Panc1 (cell line): ENCODE measurements at regions of chr19 and their contacts with region 1.

Region 1: DNA sequence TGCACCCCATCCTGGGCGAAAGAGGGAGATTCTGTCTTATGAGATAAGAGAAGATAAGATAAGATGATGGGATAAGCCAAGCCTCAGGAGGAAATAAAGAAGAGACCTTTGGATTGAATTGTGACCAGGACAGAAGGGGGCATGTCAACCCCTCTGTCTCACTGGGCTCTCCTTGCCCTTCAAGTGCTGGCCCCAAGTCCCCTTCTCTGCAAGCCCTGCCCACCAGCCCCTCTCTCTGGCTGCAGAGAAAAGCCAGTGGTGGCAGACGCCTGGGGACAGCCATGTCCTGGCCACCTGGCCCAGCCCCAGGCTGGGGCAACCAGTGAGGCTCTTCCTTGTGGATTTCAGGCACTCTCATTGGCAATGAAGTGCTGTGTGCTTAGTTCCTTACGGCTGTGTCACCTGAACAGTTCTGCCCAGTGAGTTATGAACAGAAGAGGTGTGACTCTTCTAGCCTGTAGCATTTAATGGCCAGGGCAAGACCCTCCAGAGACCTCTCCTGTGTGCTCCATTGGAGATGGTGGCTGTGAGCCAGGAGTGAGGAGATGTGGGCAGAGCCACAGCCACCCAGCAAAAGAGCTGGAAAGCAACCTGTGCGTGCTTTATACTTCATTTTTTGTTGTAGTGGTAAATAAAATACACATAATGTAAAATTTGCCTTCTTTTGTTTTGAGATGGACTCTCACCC is 6.1 kb upstream of the BTBD2 start:
- DNase-seq: no peak
- ATAC-seq: no peak
- H3K4me3 ChIP-seq: no peak overlapping the region
- H3K27ac ChIP-seq: no peak overlapping the region
- H3K4me1 ChIP-seq: no peaks in the 10 kb centered on the region
- H3K27me3 ChIP-seq: no peaks in the 10 kb centered on the region
- CTCF ChIP-seq: no peak

Region 2: DNA sequence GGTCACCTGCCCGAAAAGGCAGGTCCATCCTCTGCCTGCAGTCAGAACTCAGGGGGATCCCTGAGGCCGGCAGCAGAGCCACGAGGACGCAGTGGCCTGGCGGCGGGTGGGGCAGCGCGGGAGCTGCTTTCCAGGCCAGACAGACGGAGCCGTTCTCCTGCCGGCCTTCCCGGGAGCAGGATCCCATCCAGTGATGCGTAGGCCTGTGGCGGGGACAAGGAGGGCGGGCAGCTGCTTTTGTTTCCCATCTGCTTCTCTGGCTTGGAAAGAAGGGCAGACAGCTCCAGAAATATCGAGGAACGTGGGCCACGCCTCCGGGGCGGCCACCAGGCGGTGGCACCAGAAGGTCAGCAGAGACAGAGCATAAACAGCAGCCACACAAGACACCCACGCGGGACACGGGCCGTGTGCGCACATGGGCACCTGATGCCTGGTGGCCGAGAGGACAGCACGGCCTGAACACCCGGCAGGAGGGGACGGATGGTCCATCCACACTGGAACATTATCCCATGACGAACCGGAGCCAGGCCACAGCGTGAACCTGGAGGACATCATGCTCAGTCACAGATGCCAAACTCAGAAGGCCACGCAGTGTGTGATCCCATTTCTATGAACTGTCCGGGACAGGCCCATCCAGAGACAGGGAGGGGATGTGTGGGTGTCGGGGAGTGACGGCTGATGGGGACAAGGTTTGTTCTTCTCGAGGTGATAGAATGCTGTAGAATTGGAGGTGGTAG is 43.4 kb after region 1 on chr19:
- CTCF ChIA-PET with region 1: interaction called, 6 read pairs
- POLR2A ChIA-PET with region 1: no interaction called
- in situ Hi-C with region 1: no loop called
- intact Hi-C with region 1: loop called (anchors 5 kb)
- DNase-seq: no peak
- ATAC-seq: no peak
- H3K4me3 ChIP-seq: no peak overlapping the region
- H3K27ac ChIP-seq: peak overlapping the region; percentile 59; the same call in 1 of the 2 replicates
- H3K4me1 ChIP-seq: peaks cover 25% of the 10 kb centered on the region
- H3K27me3 ChIP-seq: no peaks in the 10 kb centered on the region
- CTCF ChIP-seq: no peak

Region 3: DNA sequence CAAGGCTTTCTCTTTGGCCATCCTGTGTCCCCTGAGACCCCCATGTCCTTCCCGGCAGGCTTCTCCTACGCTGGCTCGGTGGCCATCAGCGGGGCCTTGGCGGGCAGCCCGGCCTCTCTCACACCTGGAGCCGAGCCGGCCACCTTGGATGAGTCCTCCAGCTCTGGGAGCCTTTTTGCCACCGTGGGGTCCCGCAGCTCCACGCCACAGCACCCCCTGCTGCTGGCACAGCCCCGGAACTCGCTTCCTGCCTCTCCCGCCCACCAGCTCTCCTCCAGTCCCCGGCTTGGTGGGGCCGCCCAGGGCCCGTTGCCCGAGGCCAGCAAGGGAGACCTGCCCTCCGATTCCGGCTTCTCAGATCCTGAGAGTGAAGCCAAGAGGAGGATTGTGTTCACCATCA is 200.3 kb after region 1 on chr19:
- CTCF ChIA-PET with region 1: no interaction called
- POLR2A ChIA-PET with region 1: no interaction called
- in situ Hi-C with region 1: no loop called
- intact Hi-C with region 1: no loop called
- DNase-seq: no peak
- ATAC-seq: peak; percentile 3; the same call in 1 of the 2 replicates
- H3K4me3 ChIP-seq: no peak overlapping the region
- H3K27ac ChIP-seq: no peak overlapping the region
- H3K4me1 ChIP-seq: 0 out of 2 replicates have a peak, but pooled peaks cover 3% of the 10 kb centered on the region
- H3K27me3 ChIP-seq: no peaks in the 10 kb centered on the region
- CTCF ChIP-seq: no peak; the same call in 1 of the 2 replicates